PC-9 (cell line): ENCODE measurements at regions of chr3 and their contacts with region 1.

Region 1: GRCh38 chr3:189937307-189938124 is 183.2 kb downstream of the P3H2 start:
- DNase-seq: peak; percentile 98 to 100
- H3K4me3 ChIP-seq: peak overlapping the region; percentile 10; the same call in 1 of the 2 replicates
- H3K27ac ChIP-seq: peak overlapping the region; percentile 98
- H3K4me1 ChIP-seq: peaks cover 54% of the 10 kb centered on the region
- H3K27me3 ChIP-seq: no peaks in the 10 kb centered on the region
- CTCF ChIP-seq: no peak

Region 2: GRCh38 chr3:189160536-189161269 is 776.8 kb before region 1 on chr3:
- CTCF ChIA-PET with region 1: no interaction called
- POLR2A ChIA-PET with region 1: no interaction called
- intact Hi-C with region 1: loop called (anchors 5 kb)
- DNase-seq: peak; percentile 48 to 50
- H3K4me3 ChIP-seq: no peak overlapping the region
- H3K27ac ChIP-seq: no peak overlapping the region
- H3K4me1 ChIP-seq: peaks cover 11% of the 10 kb centered on the region
- H3K27me3 ChIP-seq: no peaks in the 10 kb centered on the region
- CTCF ChIP-seq: no peak

Region 3: GRCh38 chr3:189316242-189317019 is 621.1 kb before region 1 on chr3:
- CTCF ChIA-PET with region 1: no interaction called
- POLR2A ChIA-PET with region 1: no interaction called
- intact Hi-C with region 1: loop called (anchors 1 kb)
- DNase-seq: peak; percentile 90 to 100
- H3K4me3 ChIP-seq: peak overlapping the region; percentile 1; the same call in 1 of the 2 replicates
- H3K27ac ChIP-seq: peak overlapping the region; percentile 89
- H3K4me1 ChIP-seq: peaks cover 31% of the 10 kb centered on the region
- H3K27me3 ChIP-seq: no peaks in the 10 kb centered on the region
- CTCF ChIP-seq: no peak

Region 4: DNA sequence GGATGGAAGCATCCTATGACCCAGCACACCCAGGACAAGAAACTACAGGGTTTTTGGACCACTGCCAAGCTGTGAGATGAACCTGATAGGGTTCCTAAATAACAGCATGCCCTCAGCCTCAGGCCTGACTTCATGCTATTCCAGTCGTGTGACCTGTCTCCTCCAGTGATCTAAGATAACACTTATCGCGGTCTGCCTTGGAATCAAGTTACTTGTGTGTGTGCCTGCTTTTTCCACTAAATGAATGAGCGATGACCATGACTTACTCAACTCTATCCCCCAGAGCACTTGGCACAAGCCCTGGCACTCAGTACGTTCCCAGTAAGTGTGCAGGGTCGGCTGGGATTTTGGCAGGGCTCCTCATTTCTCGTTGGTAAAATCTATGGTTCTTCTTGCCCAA is 479.0 kb before region 1 on chr3:
- CTCF ChIA-PET with region 1: no interaction called
- POLR2A ChIA-PET with region 1: no interaction called
- intact Hi-C with region 1: loop called (anchors 2 kb)
- DNase-seq: peak; percentile 84 to 86
- H3K4me3 ChIP-seq: no peak overlapping the region
- H3K27ac ChIP-seq: no peak overlapping the region
- H3K4me1 ChIP-seq: peaks cover 11% of the 10 kb centered on the region
- H3K27me3 ChIP-seq: no peaks in the 10 kb centered on the region
- CTCF ChIP-seq: no peak

Region 5: DNA sequence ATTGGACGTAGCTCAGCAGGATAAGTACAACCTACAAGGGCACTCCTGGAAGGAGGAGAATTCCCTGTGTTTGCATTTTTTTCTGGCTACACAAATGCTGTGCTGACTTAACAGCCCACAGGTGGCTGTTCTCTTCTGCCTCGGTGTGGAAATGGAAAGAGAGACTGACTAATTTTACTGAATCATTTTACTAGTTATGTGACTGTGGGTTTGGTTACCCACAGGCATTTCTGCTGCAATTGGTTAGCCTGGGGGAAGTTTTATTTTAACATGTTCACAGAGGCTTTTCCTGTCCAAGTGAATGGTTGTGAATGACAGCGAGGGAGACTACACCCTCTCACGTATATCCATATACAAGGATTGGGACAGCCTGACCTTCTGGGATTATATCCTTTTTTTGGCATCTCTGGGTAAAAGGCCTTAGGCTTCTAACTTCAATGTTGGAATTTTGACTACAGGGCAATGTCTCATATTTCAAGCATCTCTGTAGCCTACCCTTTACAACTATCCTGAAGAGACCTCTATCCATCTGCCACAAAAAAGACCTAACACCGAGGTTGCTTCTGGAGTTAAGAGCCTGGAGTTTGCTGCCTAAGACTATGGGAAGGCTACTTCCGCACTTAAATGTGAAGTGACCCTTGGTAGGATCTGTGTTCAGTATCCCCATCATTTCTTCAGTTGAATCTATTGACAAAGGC is 373.5 kb before region 1 on chr3:
- CTCF ChIA-PET with region 1: no interaction called
- POLR2A ChIA-PET with region 1: no interaction called
- intact Hi-C with region 1: loop called (anchors 1 kb)
- DNase-seq: peak; percentile 68 to 92
- H3K4me3 ChIP-seq: no peak overlapping the region
- H3K27ac ChIP-seq: peak overlapping the region; percentile 78
- H3K4me1 ChIP-seq: peaks cover 27% of the 10 kb centered on the region
- H3K27me3 ChIP-seq: no peaks in the 10 kb centered on the region
- CTCF ChIP-seq: no peak

Region 6: GRCh38 chr3:189664311-189664710 is 273.2 kb before region 1 on chr3:
- CTCF ChIA-PET with region 1: no interaction called
- POLR2A ChIA-PET with region 1: no interaction called
- intact Hi-C with region 1: loop called (anchors 1 kb)
- DNase-seq: peak; percentile 51 to 83
- H3K4me3 ChIP-seq: no peak overlapping the region
- H3K27ac ChIP-seq: peak overlapping the region; percentile 51
- H3K4me1 ChIP-seq: peaks cover 15% of the 10 kb centered on the region
- H3K27me3 ChIP-seq: no peaks in the 10 kb centered on the region
- CTCF ChIP-seq: no peak

Region 7: DNA sequence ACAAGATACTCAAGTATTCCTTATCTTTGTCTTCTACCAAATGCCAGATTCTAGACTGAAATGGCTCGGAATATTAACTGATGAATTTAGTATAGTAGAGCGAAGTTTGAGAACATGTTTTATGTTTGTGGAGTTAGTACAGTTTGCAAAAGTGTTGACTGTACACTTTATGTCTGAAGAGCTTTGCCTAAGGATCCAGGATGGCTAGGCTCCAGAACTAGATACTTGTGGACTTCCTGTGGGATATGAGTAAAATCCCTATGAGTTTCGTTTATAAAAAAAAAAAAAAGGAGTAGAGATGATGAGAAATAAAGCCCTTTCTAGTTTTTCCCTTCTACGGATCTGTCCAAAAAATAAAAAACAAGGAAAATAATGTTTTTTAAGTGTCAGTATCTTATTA is 209.6 kb before region 1 on chr3:
- CTCF ChIA-PET with region 1: no interaction called
- POLR2A ChIA-PET with region 1: no interaction called
- intact Hi-C with region 1: no loop called
- DNase-seq: no peak
- H3K4me3 ChIP-seq: no peak overlapping the region
- H3K27ac ChIP-seq: no peak overlapping the region
- H3K4me1 ChIP-seq: no peaks in the 10 kb centered on the region
- H3K27me3 ChIP-seq: no peaks in the 10 kb centered on the region
- CTCF ChIP-seq: no peak

Region 8: DNA sequence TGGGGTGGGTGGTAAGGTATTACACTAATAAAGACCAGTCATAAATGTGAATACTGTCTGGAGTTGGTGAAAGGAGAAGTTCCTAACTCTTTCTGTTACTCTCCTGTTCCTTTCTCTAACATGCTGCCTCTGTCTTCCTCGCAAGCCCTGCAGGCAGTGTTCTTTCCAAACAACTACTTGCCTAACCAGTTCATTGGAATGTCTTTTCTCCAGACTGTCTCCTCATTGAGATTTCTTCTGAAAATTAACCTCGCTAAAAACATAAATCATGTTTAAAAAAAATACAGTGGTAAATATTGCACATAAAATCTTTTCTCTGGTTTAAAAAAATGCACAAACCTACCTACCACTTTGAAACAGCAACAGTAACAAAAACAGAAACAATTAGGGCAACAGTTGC is 171.1 kb before region 1 on chr3:
- CTCF ChIA-PET with region 1: no interaction called
- POLR2A ChIA-PET with region 1: no interaction called
- intact Hi-C with region 1: loop called (anchors 1 kb)
- DNase-seq: peak; percentile 63 to 93
- H3K4me3 ChIP-seq: peak overlapping the region; percentile 38
- H3K27ac ChIP-seq: peak overlapping the region; percentile 90
- H3K4me1 ChIP-seq: peaks cover 35% of the 10 kb centered on the region
- H3K27me3 ChIP-seq: no peaks in the 10 kb centered on the region
- CTCF ChIP-seq: no peak

Region 9: DNA sequence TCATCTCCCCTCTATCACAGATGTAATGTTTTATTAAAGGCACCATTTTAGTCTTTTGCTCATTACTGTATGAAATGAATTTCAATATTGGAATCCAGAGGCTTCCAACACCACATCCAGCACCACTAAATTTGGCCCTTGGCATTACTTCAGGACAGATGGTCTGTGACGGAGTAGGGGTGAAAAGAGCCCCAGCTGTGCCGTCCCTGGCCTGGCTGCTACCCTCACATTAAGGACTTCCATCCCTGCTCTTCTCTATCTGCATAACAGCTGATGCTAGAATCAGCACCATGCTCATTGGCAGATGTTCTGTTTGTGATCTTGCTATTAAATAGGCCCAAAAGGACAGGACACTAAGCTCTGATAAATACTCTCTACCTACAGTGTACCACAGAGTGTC is 729.3 kb after region 1 on chr3:
- CTCF ChIA-PET with region 1: no interaction called
- POLR2A ChIA-PET with region 1: no interaction called
- intact Hi-C with region 1: no loop called
- DNase-seq: no peak
- H3K4me3 ChIP-seq: no peak overlapping the region
- H3K27ac ChIP-seq: no peak overlapping the region
- H3K4me1 ChIP-seq: no peaks in the 10 kb centered on the region
- H3K27me3 ChIP-seq: no peaks in the 10 kb centered on the region
- CTCF ChIP-seq: no peak